Calu3 (cell line): ENCODE measurements at regions of chr19 and their contacts with region 1.

Region 1: GRCh38 chr19:50203281-50204080 is at the start of gene MYH14:
- DNase-seq: peak; percentile 99
- H3K4me3 Mint-ChIP-seq: peak within 1 kb of the TSS; percentile 97
- H3K27ac Mint-ChIP-seq: peak within 1 kb of the TSS; percentile 98
- H3K4me1 Mint-ChIP-seq: peaks cover 50% of the 10 kb centered on the region
- H3K27me3 Mint-ChIP-seq: no peaks in the 10 kb centered on the region
- CTCF ChIP-seq: no peak
- total RNA-seq, gene MYH14: 255 and 312 TPM in 2 replicates

Region 2: DNA sequence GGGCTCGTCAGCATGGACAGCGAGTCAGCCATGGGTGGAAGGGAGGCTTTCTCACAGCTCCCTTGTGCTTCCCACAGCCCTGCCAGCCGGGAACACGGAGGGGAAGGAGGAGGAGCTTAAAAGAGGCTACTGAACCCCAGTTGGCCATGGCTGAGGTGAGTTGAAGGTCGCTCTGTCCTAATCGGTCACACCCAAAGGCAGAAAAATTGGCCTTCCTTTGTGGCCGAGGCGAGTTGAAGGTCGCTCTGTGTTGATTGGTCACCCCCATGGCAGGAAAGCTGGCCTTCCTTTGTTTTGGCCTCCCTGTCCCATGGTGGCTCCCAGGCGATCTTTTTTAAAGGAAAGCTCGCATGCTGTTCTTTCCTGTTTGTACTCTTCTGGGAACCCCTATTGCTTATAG is 172.5 kb before region 1 on chr19:
- CTCF ChIA-PET with region 1: no interaction called
- intact Hi-C with region 1: no loop called
- DNase-seq: no peak
- H3K4me3 Mint-ChIP-seq: no peak overlapping the region
- H3K27ac Mint-ChIP-seq: no peak overlapping the region
- H3K4me1 Mint-ChIP-seq: peaks cover 16% of the 10 kb centered on the region
- H3K27me3 Mint-ChIP-seq: no peaks in the 10 kb centered on the region
- CTCF ChIP-seq: no peak

Region 3: DNA sequence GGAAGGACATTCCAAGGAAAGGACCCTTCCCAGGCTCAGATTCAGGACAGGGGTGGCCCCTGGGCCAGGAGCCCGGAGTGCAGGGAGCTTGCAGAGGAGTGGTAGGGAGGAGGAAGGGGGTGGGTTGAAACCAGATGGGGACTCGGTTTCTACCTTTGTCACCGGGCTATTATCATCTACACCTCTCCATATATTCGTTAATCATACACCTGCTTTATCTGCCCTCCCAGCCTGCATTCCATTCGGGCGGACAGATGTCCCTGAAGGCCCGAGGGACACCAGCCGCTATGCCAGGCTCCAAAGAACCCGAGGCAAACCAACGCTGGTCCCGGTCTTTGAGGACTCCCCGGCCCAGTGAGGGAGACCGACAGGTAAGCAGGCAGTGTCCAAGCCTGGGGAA is 15.5 kb before region 1 on chr19:
- CTCF ChIA-PET with region 1: interaction called, 6 read pairs
- intact Hi-C with region 1: loop called (anchors 2 kb)
- DNase-seq: no peak
- H3K4me3 Mint-ChIP-seq: peak overlapping the region; percentile 24
- H3K27ac Mint-ChIP-seq: peak overlapping the region; percentile 45
- H3K4me1 Mint-ChIP-seq: peaks cover 43% of the 10 kb centered on the region
- H3K27me3 Mint-ChIP-seq: peaks cover 33% of the 10 kb centered on the region
- CTCF ChIP-seq: no peak